Caco-2 (cell line): ENCODE measurements at regions of chr22 and their contacts with region 1.

Region 1: GRCh38 chr22:23178512-23179254 is 1.6 kb upstream of the BCR start:
- DNase-seq: peak; percentile 67 to 82
- H3K4me3 ChIP-seq: no peak overlapping the region
- H3K4me3 Mint-ChIP-seq: peak overlapping the region; percentile 77
- H3K27ac Mint-ChIP-seq: no peak overlapping the region
- H3K4me1 ChIP-seq: peaks cover 43% of the 10 kb centered on the region
- H3K4me1 Mint-ChIP-seq: peaks cover 28% of the 10 kb centered on the region
- H3K27me3 ChIP-seq: no peaks in the 10 kb centered on the region
- H3K27me3 Mint-ChIP-seq: no peaks in the 10 kb centered on the region
- CTCF ChIP-seq: peak; percentile 95

Region 2: DNA sequence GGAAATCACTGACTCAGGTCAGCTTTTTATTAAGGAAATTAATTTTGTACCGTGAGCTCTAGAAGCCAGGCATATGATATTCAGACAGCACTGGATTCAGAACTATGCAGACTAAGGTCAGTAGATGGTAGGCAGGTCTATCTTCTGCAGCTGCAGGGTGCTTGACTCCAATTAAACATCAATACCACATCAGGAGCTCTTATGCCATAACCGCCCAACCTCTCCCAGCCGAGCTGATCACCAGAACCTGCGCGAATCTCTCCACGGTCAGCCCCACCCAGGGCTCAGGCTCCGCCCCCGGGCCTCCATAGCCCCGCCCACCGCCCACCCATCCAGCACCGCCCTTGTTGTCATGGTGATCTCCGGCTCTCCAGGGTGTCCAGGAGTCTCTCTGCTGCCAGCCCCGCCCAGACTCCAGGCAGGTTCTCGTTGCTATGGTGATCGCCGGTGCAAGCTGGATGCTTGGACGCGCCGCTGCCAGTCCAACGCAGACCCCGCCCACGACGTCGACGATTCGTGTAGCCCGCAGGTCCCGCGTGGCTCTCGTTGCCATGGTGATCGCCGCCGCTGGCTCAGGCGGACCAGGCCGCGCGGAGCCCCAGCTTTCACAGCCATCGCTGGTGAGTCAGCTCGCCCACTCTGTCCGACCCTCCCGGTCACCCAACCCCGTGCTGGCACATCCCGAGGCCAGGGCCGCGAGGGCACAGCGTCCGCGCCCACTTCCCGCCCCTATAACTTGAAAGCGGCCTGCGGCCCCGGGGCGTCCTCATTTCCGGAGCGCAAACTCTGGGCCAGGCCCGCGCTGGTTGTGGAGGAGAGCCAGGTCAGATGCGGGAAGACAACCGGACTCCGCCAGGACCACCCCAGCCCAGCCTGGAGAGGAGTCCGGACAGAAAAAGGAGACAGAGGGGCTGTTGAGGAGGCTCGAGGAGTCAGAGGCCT is 33.5 kb before region 1 on chr22 and contains the start of gene RAB36:
- CTCF ChIA-PET with region 1: no interaction called
- POLR2A ChIA-PET with region 1: no interaction called
- intact Hi-C with region 1: no loop called
- DNase-seq: peak; percentile 66 to 84
- H3K4me3 ChIP-seq: no peak within 1 kb of the TSS
- H3K4me3 Mint-ChIP-seq: peak within 1 kb of the TSS; percentile 20
- H3K27ac Mint-ChIP-seq: no peak within 1 kb of the TSS
- H3K4me1 ChIP-seq: peaks cover 35% of the 10 kb centered on the region
- H3K4me1 Mint-ChIP-seq: peaks cover 33% of the 10 kb centered on the region
- H3K27me3 ChIP-seq: no peaks in the 10 kb centered on the region
- H3K27me3 Mint-ChIP-seq: no peaks in the 10 kb centered on the region
- CTCF ChIP-seq: no peak
- total RNA-seq, gene RAB36: 0.52 and 0.97 TPM in 2 replicates

Region 3: DNA sequence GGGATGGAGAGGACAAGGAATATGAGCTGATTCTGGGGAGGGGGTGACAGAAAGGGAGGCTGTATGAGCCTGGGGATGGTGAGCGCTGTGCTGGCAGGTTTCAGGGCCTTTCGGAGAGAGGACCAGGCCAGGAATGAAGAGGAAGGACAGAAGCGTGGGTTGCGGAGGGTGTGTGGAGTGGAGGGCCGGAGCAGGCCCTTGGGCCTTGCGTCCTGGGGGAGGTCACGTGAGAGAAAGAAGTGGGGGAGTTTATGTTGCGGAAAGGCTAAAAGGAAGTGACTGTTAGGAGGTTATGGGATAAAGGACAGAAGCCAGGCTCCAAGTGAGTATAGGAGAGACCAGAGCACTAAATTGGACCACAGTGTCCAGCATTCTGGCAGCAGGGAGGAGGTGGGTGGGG is 19.2 kb after region 1 on chr22:
- CTCF ChIA-PET with region 1: no interaction called
- POLR2A ChIA-PET with region 1: no interaction called
- intact Hi-C with region 1: no loop called
- DNase-seq: no peak
- H3K4me3 ChIP-seq: no peak overlapping the region
- H3K4me3 Mint-ChIP-seq: no peak overlapping the region
- H3K27ac Mint-ChIP-seq: no peak overlapping the region
- H3K4me1 ChIP-seq: no peaks in the 10 kb centered on the region
- H3K4me1 Mint-ChIP-seq: peaks cover 15% of the 10 kb centered on the region
- H3K27me3 ChIP-seq: no peaks in the 10 kb centered on the region
- H3K27me3 Mint-ChIP-seq: no peaks in the 10 kb centered on the region
- CTCF ChIP-seq: no peak

Region 4: DNA sequence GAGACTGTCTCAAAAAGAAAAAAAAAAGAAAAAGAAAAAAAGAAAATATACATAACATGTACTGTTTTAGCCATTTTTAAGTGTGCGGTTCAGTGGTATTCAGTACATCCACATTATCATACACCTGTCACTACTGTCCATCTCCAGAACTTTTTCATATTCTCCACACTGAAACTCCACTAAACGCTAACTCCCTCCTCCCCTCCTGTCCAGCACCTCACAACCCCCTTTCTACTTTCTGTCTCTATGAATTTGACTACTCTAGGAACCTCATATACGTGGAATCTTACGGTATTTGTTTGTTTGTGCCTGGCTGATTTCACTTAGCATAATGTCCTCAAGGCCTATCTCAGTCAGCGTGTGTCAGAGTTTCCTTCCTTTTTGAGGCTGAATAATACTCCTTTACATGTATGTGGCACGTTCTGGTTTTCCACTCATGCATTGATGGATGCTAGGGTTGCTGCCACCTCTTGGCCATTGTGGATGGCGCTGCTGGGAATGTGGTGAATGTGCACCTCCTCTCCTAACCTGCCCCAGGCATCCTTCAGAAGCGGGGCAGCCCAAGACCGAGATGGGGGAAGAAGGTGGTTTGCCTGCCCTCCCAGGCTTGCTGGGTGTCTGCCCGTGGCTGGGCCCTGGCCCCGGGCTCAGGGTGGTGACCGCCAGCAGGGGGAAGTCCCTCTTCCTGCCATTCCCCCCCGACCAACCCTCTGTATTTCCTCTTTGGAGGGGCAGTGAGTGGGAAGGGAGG is 62.1 kb after region 1 on chr22:
- CTCF ChIA-PET with region 1: interaction called, 6 read pairs
- POLR2A ChIA-PET with region 1: interaction called, 4 read pairs
- intact Hi-C with region 1: loop called (anchors 1 kb)
- DNase-seq: peak; percentile 49 to 50
- H3K4me3 ChIP-seq: no peak overlapping the region
- H3K4me3 Mint-ChIP-seq: peak overlapping the region; percentile 69
- H3K27ac Mint-ChIP-seq: peak overlapping the region; percentile 94
- H3K4me1 ChIP-seq: peaks cover 54% of the 10 kb centered on the region
- H3K4me1 Mint-ChIP-seq: peaks cover 48% of the 10 kb centered on the region
- H3K27me3 ChIP-seq: no peaks in the 10 kb centered on the region
- H3K27me3 Mint-ChIP-seq: no peaks in the 10 kb centered on the region
- CTCF ChIP-seq: peak in 1 of 2 experiments; percentile 31

Region 5: GRCh38 chr22:23259916-23260644 is 81.4 kb after region 1 on chr22:
- CTCF ChIA-PET with region 1: no interaction called
- POLR2A ChIA-PET with region 1: interaction called, 3 read pairs
- intact Hi-C with region 1: loop called (anchors 1 kb)
- DNase-seq: peak in 1 of 2 experiments; percentile 45
- H3K4me3 ChIP-seq: no peak overlapping the region
- H3K4me3 Mint-ChIP-seq: no peak overlapping the region
- H3K27ac Mint-ChIP-seq: peak overlapping the region; percentile 59
- H3K4me1 ChIP-seq: no peaks in the 10 kb centered on the region
- H3K4me1 Mint-ChIP-seq: peaks cover 6% of the 10 kb centered on the region
- H3K27me3 ChIP-seq: no peaks in the 10 kb centered on the region
- H3K27me3 Mint-ChIP-seq: no peaks in the 10 kb centered on the region
- CTCF ChIP-seq: peak in 1 of 2 experiments; percentile 50

Region 6: DNA sequence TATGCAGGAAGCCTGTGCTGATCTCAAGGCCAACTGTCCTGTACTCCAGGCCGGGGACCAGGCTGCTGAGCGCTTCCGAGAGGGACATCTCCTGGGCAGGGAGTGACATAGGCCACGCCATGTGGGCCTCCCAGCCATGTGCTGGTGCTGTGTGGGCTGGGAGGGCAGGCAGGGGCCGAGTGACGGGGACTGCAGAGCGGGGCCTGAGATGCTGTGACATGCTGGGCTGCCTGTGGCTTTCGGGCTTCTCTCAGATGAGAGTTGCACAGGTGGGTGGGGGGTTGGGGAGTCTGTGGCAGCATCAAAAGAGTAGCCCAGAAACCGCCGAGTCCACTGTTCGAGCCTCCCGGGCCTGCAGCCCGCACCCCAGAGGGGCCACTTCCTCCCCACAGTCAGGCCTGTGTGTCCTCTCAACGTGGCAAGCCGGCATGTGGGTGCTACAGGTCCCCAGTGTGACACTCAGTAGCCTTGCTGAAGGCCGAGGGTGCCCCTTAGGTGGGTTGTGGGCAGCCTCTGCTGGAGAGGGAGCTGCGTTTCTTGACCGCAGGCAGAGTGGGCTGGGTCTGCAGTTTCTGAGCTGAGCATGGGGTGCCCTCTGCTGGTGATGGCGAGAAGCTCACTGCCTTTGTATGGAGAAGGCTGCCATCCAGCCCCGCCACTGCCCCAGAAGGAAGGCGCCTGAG is 102.9 kb after region 1 on chr22:
- CTCF ChIA-PET with region 1: interaction called, 57 read pairs
- POLR2A ChIA-PET with region 1: no interaction called
- intact Hi-C with region 1: loop called (anchors 1 kb)
- DNase-seq: peak; percentile 81 to 86
- H3K4me3 ChIP-seq: no peak overlapping the region
- H3K4me3 Mint-ChIP-seq: no peak overlapping the region
- H3K27ac Mint-ChIP-seq: no peak overlapping the region
- H3K4me1 ChIP-seq: no peaks in the 10 kb centered on the region
- H3K4me1 Mint-ChIP-seq: no peaks in the 10 kb centered on the region
- H3K27me3 ChIP-seq: no peaks in the 10 kb centered on the region
- H3K27me3 Mint-ChIP-seq: no peaks in the 10 kb centered on the region
- CTCF ChIP-seq: peak; percentile 92

Region 7: GRCh38 chr22:23385291-23386244 is 206.9 kb after region 1 on chr22:
- CTCF ChIA-PET with region 1: interaction called, 5 read pairs
- POLR2A ChIA-PET with region 1: no interaction called
- intact Hi-C with region 1: loop called (anchors 5 kb)
- DNase-seq: peak; percentile 79 to 89
- H3K4me3 ChIP-seq: no peak overlapping the region
- H3K4me3 Mint-ChIP-seq: no peak overlapping the region
- H3K27ac Mint-ChIP-seq: no peak overlapping the region
- H3K4me1 ChIP-seq: peaks cover 6% of the 10 kb centered on the region; the same call in 1 of the 2 replicates
- H3K4me1 Mint-ChIP-seq: no peaks in the 10 kb centered on the region
- H3K27me3 ChIP-seq: no peaks in the 10 kb centered on the region
- H3K27me3 Mint-ChIP-seq: peaks cover 5% of the 10 kb centered on the region
- CTCF ChIP-seq: peak; percentile 94 to 97

Region 8: DNA sequence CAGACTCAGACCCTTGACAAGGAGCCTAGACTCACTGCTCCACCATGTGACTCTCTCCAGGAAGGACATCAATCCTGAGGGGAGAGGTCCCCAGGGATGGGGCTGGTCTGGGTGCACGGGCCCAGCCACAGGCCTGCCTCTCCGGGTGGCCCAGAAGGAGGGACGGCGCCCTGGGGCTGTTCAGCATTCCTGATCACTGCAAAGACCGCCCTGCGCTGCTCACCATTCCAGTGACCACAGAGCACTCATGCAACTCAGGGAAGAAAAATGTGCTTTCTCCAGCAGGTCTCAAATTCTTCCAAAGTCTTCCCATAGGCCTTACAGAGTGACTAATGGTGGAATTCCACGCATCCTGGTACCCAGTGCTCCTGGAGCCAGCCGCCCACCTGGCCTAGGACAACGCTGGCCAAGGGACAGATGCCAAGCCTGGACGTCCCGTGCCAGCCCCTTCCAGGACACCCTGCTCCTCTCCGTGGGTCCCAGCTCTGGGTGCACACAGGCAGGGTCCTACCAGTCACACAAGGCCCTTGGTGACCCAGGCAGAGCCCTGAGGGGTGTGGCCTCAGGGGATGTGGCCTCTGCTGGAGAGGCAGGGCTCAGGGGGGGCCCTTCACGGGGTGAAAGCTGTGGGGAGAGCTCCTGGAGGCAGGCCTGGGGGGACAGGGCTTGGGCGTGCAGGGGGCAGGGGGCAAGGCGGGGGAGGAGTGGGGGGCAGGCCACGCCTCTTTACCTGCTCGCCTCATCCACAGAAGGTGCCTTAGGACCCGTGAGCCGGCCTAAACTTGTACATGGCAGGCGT is 222.6 kb after region 1 on chr22:
- CTCF ChIA-PET with region 1: no interaction called
- POLR2A ChIA-PET with region 1: no interaction called
- intact Hi-C with region 1: no loop called
- DNase-seq: peak in 1 of 2 experiments; percentile 34
- H3K4me3 ChIP-seq: peak overlapping the region; percentile 51
- H3K4me3 Mint-ChIP-seq: peak overlapping the region; percentile 70
- H3K27ac Mint-ChIP-seq: no peak overlapping the region
- H3K4me1 ChIP-seq: peaks cover 5% of the 10 kb centered on the region
- H3K4me1 Mint-ChIP-seq: no peaks in the 10 kb centered on the region
- H3K27me3 ChIP-seq: no peaks in the 10 kb centered on the region
- H3K27me3 Mint-ChIP-seq: no peaks in the 10 kb centered on the region
- CTCF ChIP-seq: no peak